ENCODE measurements at regions of chr20 and their contacts with region 1.

Region 1: DNA sequence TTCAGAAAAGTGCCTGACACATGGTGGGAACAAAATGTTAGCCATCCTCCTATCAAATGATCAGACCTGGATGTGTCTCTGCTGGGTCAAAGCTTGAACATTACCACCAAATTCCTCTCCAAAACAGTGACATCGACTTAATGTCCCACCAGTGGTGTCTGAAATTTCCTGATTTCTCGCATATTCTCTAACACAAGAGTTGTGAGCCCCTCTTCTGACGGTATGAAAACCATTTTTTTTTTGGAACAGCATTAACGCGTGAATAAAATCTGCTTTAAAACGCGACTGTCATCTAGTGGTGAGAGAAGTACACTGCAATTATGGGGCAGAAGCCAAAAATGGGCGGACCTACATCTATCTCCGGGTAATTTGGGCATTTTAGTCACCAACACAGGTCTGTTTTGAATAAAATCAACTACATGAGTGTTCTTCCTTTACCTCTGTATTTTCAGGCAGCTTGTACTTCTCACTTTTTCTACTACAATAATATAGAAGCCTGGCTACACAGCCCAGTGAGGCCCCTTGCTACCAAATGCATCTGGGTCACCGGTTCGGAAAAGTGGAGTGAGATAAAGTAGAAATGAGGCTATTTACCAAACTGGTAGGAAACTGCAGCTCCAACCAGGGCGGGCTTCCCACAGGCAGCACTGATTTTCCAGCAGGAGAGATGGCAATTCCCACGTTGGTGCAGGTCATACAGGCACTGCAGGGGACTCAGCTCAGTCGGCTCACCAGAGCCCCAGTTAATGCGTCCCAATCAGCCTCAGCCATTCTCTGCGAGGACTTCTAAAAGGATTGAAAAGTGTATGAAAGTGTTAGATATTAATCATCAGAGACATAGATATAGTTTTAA is 27.4 kb downstream of the MGME1 start:
- DNase-seq: peak; percentile 70
- H3K27ac ChIP-seq: no peak overlapping the region
- CTCF ChIP-seq: peak; percentile 100

Region 2: GRCh38 chr20:17749975-17750721 is 246.0 kb before region 1 on chr20:
- CTCF ChIA-PET with region 1: no interaction called
- POLR2A ChIA-PET with region 1: no interaction called
- DNase-seq: no peak
- H3K27ac ChIP-seq: no peak overlapping the region
- CTCF ChIP-seq: no peak

Region 3: DNA sequence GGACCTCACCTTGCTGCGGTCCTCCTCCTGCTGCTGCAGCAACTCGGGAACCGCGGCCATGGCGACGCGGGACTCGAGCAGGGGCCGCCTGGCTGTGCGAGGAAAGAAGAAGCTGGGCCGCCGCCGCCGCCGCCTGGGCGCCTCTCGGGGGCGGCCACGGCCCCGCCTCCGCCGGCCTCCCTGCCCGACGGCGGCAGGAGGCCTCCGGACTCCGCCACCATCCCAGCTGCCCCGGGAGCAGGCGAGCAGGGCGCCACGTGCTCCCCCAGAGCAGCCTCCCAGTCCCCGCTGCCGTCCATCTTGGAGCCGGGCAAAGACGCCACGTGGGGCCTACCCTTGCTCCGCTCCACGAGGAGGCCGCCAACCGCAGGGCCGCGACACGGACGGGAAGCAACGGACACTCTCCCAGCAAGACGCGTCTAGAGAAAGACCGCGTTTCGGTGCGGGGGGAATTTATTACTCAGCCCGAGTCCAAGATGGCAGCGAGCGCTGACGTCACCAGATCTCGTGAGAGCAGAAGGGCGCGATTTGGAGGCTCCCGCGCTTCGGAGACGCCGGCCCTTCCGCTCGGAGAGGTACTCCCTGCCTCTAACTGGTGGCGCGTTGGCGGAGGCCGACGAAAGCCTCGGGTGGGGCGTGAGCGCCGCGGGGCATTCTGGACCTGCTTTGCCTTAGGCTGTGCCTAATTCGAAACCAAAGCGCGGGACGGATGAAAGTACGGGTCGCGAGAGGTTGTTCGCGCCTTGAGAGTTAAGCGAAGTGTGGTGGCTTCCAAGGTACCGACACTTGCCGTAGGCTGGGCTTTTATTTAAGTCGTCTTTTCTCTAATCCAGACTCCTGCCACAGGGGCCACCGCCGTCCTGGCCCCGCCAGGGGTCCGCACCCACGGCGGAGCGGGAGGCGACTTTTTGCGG is 27.6 kb before region 1 on chr20 and contains the starts of genes MGME1 and SNX5:
- CTCF ChIA-PET with region 1: interaction called, 12 read pairs
- POLR2A ChIA-PET with region 1: interaction called, 6 read pairs
- DNase-seq: peak; percentile 97
- H3K27ac ChIP-seq: peak within 1 kb of the TSS; percentile 98
- CTCF ChIP-seq: no peak

Region 4: GRCh38 chr20:17985388-17986018 is 10.7 kb before region 1 on chr20:
- CTCF ChIA-PET with region 1: interaction called, 10 read pairs
- POLR2A ChIA-PET with region 1: no interaction called
- DNase-seq: no peak
- H3K27ac ChIP-seq: no peak overlapping the region
- CTCF ChIP-seq: no peak

Region 5: GRCh38 chr20:18272451-18272850 is 276.3 kb after region 1 on chr20:
- CTCF ChIA-PET with region 1: no interaction called
- POLR2A ChIA-PET with region 1: no interaction called
- DNase-seq: no peak
- H3K27ac ChIP-seq: no peak overlapping the region
- CTCF ChIP-seq: no peak

Measured in RWPE1 (cell line).